HepG2 (cell line): ENCODE measurements at regions of chr3 and their contacts with region 1.

Region 1: GRCh38 chr3:64248247-64248646 is 23.0 kb upstream of the PRICKLE2 start:
- DNase-seq: peak; percentile 70
- ATAC-seq: peak; percentile 75
- H3K4me3 ChIP-seq: peak overlapping the region in 1 of 3 experiments; percentile 25; a peak in 1 of 6 replicates
- H3K27ac ChIP-seq: peak overlapping the region; percentile 41
- H3K4me1 ChIP-seq: peaks cover 53% of the 10 kb centered on the region
- H3K27me3 ChIP-seq: no peaks in the 10 kb centered on the region
- CTCF ChIP-seq: no peak
- EP300 ChIP-seq: peak in 1 of 2 experiments; percentile 62; a peak in 2 of 4 replicates
- POLR2A ChIP-seq: no peak
- RAD21 ChIP-seq: no peak

Region 2: GRCh38 chr3:64176461-64176996 is 71.7 kb before region 1 on chr3:
- CTCF ChIA-PET with region 1: no interaction called
- POLR2A ChIA-PET with region 1: no interaction called
- in situ Hi-C with region 1: no loop called
- intact Hi-C with region 1: no loop called
- DNase-seq: no peak
- ATAC-seq: no peak
- H3K4me3 ChIP-seq: no peak overlapping the region
- H3K27ac ChIP-seq: no peak overlapping the region
- H3K4me1 ChIP-seq: peaks cover 12% of the 10 kb centered on the region
- H3K27me3 ChIP-seq: no peaks in the 10 kb centered on the region; a peak in 1 of 5 replicates
- CTCF ChIP-seq: no peak
- EP300 ChIP-seq: no peak
- POLR2A ChIP-seq: no peak
- RAD21 ChIP-seq: no peak

Region 3: GRCh38 chr3:64939747-64940450 is 691.7 kb after region 1 on chr3:
- CTCF ChIA-PET with region 1: no interaction called
- POLR2A ChIA-PET with region 1: no interaction called
- in situ Hi-C with region 1: no loop called
- intact Hi-C with region 1: loop called (anchors 5 kb)
- DNase-seq: no peak
- ATAC-seq: no peak
- H3K4me3 ChIP-seq: no peak overlapping the region
- H3K27ac ChIP-seq: no peak overlapping the region
- H3K4me1 ChIP-seq: no peaks in the 10 kb centered on the region
- H3K27me3 ChIP-seq: no peaks in the 10 kb centered on the region
- CTCF ChIP-seq: no peak
- EP300 ChIP-seq: no peak
- POLR2A ChIP-seq: no peak
- RAD21 ChIP-seq: no peak